Colonic mucosa (tissue), 4 donors: ENCODE measurements at regions of chr16 and their contacts with region 1.

Region 1: GRCh38 chr16:67521095-67521804 is 7.4 kb upstream of the RIPOR1 start:
- DNase-seq: peak; percentile 99
- H3K4me3 ChIP-seq: peak overlapping the region; percentile 17
- H3K27ac ChIP-seq: peak overlapping the region; percentile 91
- H3K4me1 ChIP-seq: no peaks in the 10 kb centered on the region
- H3K27me3 ChIP-seq: no peaks in the 10 kb centered on the region
- CTCF ChIP-seq: peak; percentile 72

Region 2: DNA sequence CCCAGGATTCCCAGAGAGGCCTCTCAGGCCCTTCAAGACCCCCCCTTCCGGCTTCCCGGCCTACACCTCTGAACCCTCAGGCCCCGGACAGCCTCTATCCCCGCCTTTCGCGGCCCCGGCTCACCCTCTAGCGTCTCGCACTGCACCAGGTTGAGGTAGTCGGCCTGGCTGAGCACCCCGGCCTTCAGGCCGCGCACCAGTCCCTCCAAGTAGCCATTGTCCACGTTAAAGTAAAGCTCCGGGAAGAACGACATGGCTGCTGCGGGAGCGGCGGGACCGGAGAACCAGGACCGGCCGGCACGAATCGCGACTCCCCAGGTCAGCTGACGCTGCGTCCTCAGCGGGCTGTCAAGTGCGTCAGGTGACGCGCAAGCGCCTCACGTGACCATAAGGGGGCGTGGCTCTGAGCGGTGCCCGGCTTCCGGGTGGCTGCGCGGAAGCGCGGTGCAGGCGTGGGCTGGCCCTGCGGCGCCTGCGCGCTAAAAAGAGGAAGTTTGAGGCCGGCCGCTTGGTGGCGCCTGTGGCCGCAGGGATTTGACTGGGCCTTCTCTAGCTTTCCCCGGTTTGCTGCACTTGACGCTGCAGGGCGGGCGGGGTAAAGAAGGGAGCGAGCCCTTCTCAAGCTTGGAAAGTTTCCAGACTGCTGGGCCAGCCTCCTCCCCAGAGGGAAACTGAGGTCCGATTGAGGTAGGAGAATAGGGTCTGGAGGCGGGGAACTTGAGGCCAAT is 40.3 kb before region 1 on chr16 and contains the start of gene ATP6V0D1:
- intact Hi-C with region 1: loop called (anchors 5 kb)
- DNase-seq: peak; percentile 99
- H3K4me3 ChIP-seq: peak within 1 kb of the TSS; percentile 79
- H3K27ac ChIP-seq: peak within 1 kb of the TSS; percentile 65
- H3K4me1 ChIP-seq: peaks cover 14% of the 10 kb centered on the region
- H3K27me3 ChIP-seq: no peaks in the 10 kb centered on the region
- CTCF ChIP-seq: peak; percentile 70
- total RNA-seq, gene ATP6V0D1: 194 to 195 TPM

Region 3: GRCh38 chr16:67667817-67668494 is 146.7 kb after region 1 on chr16:
- intact Hi-C with region 1: loop called (anchors 10 kb)
- DNase-seq: peak; percentile 84
- H3K4me3 ChIP-seq: peak overlapping the region; percentile 88
- H3K27ac ChIP-seq: peak overlapping the region; percentile 70
- H3K4me1 ChIP-seq: peaks cover 19% of the 10 kb centered on the region
- H3K27me3 ChIP-seq: no peaks in the 10 kb centered on the region
- CTCF ChIP-seq: peak; percentile 90